ENCODE measurements at regions of chr17 and their contacts with region 1.

Region 1: DNA sequence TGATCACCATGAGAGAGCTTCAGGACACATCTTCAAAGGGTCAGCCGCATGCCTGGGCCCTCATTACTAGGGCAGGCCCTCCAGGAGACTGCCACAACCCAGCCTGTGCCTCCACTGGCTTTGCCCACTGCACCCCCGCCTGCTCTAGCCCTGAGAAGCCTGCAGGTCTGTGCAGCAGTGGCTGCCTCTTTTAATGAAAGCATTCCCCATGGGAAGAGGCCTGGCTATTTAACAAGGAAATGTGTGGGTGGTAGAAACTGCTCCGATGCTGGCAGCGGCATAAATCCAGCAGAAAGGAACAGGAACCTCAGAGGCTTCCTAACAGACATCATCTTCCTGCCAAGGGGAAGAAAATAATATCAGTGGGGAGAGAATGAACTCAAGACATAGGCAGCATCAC is 375 bp upstream of the KRT32 start:
- DNase-seq: no peak
- ATAC-seq: no peak
- H3K4me3 ChIP-seq: no peak overlapping the region
- H3K27ac ChIP-seq: no peak overlapping the region
- H3K4me1 ChIP-seq: no peaks in the 10 kb centered on the region
- H3K27me3 ChIP-seq: peaks cover 2 to 43% of the 10 kb centered on the region in 2 experiments; a peak in 3 of 5 replicates
- CTCF ChIP-seq: no peak
- EP300 ChIP-seq: no peak
- POLR2A ChIP-seq: no peak
- RAD21 ChIP-seq: no peak

Region 2: DNA sequence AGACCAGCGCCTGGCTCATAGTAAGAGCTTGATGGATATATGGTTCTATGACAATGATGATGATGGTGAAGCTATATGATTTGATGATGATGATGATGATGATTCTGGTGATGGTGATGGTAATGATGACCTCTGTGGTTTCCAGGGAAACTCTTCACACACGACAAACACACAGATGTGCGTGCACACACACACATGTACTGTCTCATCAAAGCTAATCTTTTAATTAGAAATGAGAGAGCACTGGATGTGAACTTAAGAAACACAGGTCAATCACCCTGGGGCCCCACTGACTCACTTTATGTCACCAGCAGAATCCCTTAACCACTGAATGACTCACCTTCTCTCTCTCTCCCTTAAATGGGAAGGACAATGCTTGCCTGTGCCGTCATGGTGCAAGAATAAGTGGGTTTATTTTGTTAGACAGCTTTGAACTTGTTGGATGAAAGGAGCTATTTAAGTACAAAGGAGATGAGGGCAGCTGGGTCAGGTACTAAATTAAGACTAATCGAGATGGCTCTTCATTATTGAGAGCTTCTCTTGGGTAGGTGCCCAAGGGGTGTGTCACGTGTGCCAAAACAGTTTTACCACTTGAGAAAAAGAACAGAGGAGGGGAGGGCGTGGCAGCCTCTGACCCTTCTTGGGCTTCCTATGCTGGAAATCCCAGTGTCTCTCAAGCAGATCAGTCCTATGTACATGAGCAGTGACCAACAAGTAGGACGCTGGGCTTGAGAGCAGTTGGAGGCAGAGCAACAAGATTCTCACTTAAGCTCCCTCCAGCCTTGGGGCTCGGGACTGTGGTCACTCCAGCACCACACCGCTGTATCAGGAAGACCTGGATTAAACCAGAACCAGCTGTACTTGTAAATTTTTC is 63.5 kb before region 1 on chr17:
- CTCF ChIA-PET with region 1: no interaction called
- POLR2A ChIA-PET with region 1: no interaction called
- in situ Hi-C with region 1: no loop called
- intact Hi-C with region 1: loop called (anchors 2 kb)
- DNase-seq: peak; percentile 95
- ATAC-seq: peak; percentile 46; the same call in 1 of the 3 replicates
- H3K4me3 ChIP-seq: no peak overlapping the region
- H3K27ac ChIP-seq: peak overlapping the region; percentile 7
- H3K4me1 ChIP-seq: peaks cover 34% of the 10 kb centered on the region
- H3K27me3 ChIP-seq: no peaks in the 10 kb centered on the region
- CTCF ChIP-seq: no peak
- EP300 ChIP-seq: peak in 1 of 2 experiments; percentile 87; a peak in 2 of 4 replicates
- POLR2A ChIP-seq: no peak
- RAD21 ChIP-seq: no peak

Region 3: GRCh38 chr17:41567317-41567716 is 99.8 kb after region 1 on chr17:
- CTCF ChIA-PET with region 1: no interaction called
- POLR2A ChIA-PET with region 1: no interaction called
- in situ Hi-C with region 1: no loop called
- intact Hi-C with region 1: no loop called
- DNase-seq: no peak
- ATAC-seq: no peak
- H3K4me3 ChIP-seq: no peak overlapping the region
- H3K27ac ChIP-seq: no peak overlapping the region
- H3K4me1 ChIP-seq: 0 out of 2 replicates have a peak, but pooled peaks cover 7% of the 10 kb centered on the region
- H3K27me3 ChIP-seq: peaks cover 3 to 24% of the 10 kb centered on the region in 2 experiments; a peak in 3 of 5 replicates
- CTCF ChIP-seq: no peak
- EP300 ChIP-seq: no peak
- POLR2A ChIP-seq: no peak
- RAD21 ChIP-seq: no peak

Region 4: DNA sequence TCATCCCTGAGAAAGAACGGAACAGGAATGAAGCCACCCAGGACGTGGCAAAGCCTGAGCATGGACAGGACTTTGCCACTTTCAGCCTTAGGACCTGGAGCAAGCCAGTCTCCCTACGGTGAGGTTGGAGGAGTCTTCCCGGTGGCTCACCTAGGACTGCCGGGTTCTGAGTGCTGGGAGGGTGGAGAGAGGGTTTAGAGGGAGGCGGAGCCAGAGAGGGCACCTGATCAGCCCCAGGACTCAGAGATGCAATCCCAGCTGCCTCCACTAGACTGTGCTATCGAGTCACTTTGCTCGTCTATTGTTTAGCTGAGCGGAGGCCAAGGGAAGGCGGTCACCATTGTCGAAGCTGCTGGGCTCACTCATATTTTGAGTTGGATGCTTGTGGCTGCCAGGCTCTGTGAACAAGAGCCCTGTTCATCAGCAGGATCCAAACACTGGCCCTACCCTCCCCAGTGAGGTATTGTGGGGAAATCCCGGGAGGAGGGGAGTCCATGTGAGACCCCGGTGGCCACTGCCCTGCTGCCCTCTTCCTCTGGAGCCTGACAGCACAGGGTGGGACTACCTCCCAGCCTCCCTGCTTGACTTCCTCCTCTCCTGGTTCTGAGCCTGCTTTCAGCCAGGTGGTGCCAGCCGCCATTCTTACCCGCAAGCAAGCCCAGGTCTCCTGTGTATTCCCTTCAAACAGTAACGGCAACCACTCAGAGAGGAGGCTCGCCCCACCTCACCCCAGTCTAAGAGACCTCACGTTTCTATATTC is 112.1 kb after region 1 on chr17:
- CTCF ChIA-PET with region 1: no interaction called
- POLR2A ChIA-PET with region 1: no interaction called
- in situ Hi-C with region 1: no loop called
- intact Hi-C with region 1: no loop called
- DNase-seq: peak; percentile 85
- ATAC-seq: peak; percentile 89
- H3K4me3 ChIP-seq: no peak overlapping the region
- H3K27ac ChIP-seq: no peak overlapping the region
- H3K4me1 ChIP-seq: no peaks in the 10 kb centered on the region
- H3K27me3 ChIP-seq: peaks cover 0 to 4% of the 10 kb centered on the region in 2 experiments; a peak in 2 of 5 replicates
- CTCF ChIP-seq: peak; percentile 90
- EP300 ChIP-seq: no peak
- POLR2A ChIP-seq: no peak
- RAD21 ChIP-seq: peak; percentile 59